ENCODE measurements at regions of chr20 and their contacts with region 1.

Region 1: DNA sequence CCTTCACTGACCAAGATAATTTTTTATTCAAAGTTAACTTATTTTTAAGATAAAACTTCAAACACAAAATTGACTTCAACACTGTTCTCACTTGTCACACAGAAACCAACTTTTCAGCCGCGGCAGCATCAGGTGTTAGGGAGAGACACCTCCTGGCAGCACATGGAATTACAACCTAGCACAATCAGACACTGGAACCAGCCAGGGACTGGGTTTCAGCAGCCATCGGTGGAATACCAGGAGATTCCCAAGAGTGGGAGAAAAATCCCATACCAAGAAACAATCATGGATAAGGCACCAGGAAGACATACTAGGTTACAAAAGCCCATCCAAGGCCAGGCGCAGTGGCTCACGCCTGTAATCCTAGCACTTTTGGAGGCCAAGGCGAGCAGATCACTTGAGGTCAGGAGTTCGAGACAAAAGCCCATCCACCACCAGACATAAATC is 70.0 kb downstream of the SNX5 start:
- DNase-seq: peak; percentile 78
- H3K4me3 Mint-ChIP-seq: no peak overlapping the region
- H3K27ac Mint-ChIP-seq: no peak overlapping the region
- H3K4me1 Mint-ChIP-seq: peaks cover 12% of the 10 kb centered on the region
- H3K27me3 Mint-ChIP-seq: peaks cover 25% of the 10 kb centered on the region

Region 2: DNA sequence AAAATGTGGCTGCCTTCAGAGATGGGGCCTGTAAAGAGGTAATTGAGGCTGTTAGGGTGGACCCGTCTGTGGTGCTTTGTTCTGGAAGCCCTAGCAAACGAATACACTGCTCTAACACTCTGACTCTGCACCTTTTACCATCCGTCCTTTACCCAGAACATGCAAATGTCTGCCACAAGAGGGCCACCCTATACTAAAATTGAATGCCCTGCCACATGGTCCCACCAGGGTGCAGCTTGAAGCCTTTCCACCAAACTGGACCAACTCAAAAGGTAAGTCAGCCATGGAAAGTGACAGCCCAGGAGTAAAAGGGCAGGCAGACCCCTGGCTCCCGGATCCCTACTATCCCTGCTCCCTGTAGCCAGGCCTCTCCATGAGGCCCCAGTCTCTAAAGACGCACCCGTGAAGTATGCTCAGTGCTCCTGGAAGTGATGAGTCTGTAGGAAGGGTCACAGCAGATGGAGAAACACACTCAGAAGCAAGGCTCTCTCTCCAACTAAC is 361.6 kb before region 1 on chr20:
- CTCF ChIA-PET with region 1: interaction called, 8 read pairs
- intact Hi-C with region 1: loop called (anchors 1 kb)
- DNase-seq: peak; percentile 78
- H3K4me3 Mint-ChIP-seq: no peak overlapping the region
- H3K27ac Mint-ChIP-seq: no peak overlapping the region
- H3K4me1 Mint-ChIP-seq: no peaks in the 10 kb centered on the region
- H3K27me3 Mint-ChIP-seq: peaks cover 2% of the 10 kb centered on the region

Region 3: GRCh38 chr20:17654649-17655285 is 243.8 kb before region 1 on chr20:
- CTCF ChIA-PET with region 1: interaction called, 3 read pairs
- intact Hi-C with region 1: loop called (anchors 1 kb)
- DNase-seq: peak; percentile 17
- H3K4me3 Mint-ChIP-seq: no peak overlapping the region
- H3K27ac Mint-ChIP-seq: no peak overlapping the region
- H3K4me1 Mint-ChIP-seq: peaks cover 2% of the 10 kb centered on the region
- H3K27me3 Mint-ChIP-seq: no peaks in the 10 kb centered on the region

Region 4: DNA sequence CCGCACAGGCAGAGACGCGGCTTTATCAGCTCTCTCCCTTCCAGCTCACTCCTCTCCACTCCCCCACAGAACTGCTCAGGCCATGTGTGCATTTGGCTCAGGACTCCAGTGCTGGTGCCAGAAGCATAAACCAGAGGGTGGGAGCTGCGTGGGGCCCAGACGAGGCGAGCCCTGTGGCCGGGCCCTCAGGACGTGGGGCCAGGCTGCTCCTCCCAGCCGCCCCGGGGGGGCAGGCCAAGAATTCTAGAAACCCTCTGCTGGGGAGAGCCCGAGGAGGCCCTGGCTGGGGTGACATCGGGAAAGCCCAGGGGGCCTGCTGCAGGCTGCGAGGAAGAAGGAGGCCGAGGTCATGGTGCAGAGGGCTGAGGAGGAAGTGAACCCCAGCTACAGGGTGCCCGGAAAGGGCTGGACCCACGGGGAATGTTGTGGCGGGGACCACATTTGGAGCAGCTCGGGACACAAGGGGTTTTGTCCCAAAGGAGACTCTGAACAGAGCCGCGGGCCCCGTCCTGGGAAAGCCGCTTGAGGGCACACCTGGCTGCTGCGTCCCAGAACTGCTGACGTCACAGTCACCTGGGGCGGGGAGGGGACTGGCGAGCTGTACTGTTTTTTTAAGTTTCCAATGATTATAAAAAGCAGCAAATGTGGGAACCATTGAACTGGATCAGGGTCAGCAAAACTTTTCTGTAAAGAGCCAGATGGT is 91.7 kb before region 1 on chr20:
- CTCF ChIA-PET with region 1: interaction called, 4 read pairs
- intact Hi-C with region 1: loop called (anchors 5 kb)
- DNase-seq: no peak
- H3K4me3 Mint-ChIP-seq: no peak overlapping the region
- H3K27ac Mint-ChIP-seq: no peak overlapping the region
- H3K4me1 Mint-ChIP-seq: no peaks in the 10 kb centered on the region
- H3K27me3 Mint-ChIP-seq: no peaks in the 10 kb centered on the region

Region 5: DNA sequence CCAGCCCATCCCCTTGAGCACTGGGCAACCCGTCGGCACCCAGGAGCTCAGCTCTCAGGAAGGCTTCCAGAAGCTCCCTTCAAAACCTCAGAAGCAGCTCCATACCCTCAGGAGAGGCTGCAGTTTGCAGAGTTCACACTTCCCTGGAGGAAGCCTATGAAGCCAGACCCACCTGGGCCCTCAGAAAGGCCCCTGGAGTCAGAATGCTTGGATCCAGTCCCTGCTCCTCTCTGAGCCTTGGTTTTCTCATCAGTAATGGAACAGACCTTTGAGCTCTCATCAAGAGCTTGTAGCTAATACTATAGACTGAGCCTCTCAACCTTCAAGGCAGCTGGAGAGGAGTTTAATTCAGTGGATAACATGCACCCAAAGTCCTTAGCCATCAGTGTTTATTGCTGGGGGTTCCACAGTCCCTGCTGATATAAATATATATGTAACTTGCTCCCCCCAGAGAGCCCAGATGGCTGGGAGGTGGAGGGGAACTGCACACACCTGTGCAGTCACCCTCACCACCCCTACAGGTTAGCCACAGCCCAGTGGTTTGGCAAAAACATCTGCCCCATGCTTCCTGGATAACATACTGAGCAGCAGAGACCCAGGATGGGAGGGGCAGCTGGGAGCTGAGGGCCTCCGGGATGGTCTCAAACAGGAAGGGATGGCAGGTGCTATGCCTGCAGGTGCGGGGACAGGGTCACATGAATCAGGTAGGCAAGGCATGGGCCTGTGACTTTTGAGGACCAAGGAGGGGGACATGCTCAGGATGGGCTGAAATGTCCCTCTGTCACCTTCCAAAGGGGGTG is 50.1 kb before region 1 on chr20:
- CTCF ChIA-PET with region 1: no interaction called
- intact Hi-C with region 1: no loop called
- DNase-seq: no peak
- H3K4me3 Mint-ChIP-seq: no peak overlapping the region
- H3K27ac Mint-ChIP-seq: no peak overlapping the region
- H3K4me1 Mint-ChIP-seq: no peaks in the 10 kb centered on the region
- H3K27me3 Mint-ChIP-seq: no peaks in the 10 kb centered on the region

Region 6: DNA sequence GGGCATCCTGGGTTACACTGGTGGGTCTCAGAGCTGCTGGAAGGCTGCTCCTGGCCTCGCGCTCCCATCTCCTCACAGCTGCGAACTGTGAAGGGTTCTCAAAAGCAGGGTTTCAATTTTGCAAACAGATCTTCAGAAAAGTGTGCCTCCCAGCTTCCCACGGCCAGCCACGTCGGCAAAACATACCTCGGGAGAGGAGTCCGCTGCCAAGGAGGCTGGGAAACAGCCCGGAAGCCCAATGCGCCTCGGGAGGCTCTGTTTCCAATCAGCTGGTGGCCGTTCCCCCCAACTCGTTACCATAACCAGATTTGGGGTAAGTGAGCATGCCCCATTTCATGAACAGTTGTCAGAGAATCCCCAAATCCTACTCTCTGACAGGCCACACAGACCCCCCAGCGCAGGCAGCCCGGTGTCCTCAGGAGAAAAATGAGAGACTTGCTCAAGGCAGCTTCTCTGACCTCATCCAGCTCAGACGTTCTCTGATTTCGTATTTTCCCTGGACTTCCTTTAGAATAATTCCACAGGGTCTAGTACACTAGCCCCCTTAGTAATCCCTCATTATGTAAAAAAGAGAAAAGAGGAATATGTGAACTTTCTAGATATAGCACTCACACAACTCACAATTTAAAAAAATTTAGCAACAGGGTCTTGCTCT is 28.4 kb before region 1 on chr20:
- CTCF ChIA-PET with region 1: no interaction called
- intact Hi-C with region 1: no loop called
- DNase-seq: no peak
- H3K4me3 Mint-ChIP-seq: no peak overlapping the region
- H3K27ac Mint-ChIP-seq: no peak overlapping the region
- H3K4me1 Mint-ChIP-seq: peaks cover 10% of the 10 kb centered on the region
- H3K27me3 Mint-ChIP-seq: peaks cover 10% of the 10 kb centered on the region

Region 7: DNA sequence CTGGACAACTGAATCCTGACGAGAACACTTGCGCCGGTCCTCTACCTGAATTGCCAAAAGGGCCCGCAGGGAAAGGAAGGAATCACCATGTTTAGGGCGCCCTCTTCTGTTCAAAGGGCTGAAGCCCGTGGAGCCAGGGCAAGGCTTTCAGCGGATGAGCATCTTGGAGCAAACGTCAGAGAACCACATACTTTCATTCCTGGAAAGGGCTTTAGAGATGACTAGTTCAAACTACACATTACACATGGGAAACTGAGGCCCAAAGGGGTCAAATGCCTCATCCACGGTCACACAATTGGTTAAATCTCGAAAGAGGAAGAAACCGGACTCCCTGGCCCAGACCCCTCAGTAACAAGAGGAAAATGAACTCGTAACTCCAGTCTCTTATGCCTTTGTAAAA is 378.2 kb after region 1 on chr20:
- CTCF ChIA-PET with region 1: no interaction called
- intact Hi-C with region 1: loop called (anchors 10 kb)
- DNase-seq: peak; percentile 80
- H3K4me3 Mint-ChIP-seq: no peak overlapping the region
- H3K27ac Mint-ChIP-seq: no peak overlapping the region
- H3K4me1 Mint-ChIP-seq: no peaks in the 10 kb centered on the region
- H3K27me3 Mint-ChIP-seq: peaks cover 37% of the 10 kb centered on the region

Measured in activated naive CD4-positive, alpha-beta T cell treated with anti-CD3 and anti-CD28 coated beads for 36 hours (primary cell).